MCF 10A (cell line): ENCODE measurements at regions of chr12 and their contacts with region 1.

Region 1: DNA sequence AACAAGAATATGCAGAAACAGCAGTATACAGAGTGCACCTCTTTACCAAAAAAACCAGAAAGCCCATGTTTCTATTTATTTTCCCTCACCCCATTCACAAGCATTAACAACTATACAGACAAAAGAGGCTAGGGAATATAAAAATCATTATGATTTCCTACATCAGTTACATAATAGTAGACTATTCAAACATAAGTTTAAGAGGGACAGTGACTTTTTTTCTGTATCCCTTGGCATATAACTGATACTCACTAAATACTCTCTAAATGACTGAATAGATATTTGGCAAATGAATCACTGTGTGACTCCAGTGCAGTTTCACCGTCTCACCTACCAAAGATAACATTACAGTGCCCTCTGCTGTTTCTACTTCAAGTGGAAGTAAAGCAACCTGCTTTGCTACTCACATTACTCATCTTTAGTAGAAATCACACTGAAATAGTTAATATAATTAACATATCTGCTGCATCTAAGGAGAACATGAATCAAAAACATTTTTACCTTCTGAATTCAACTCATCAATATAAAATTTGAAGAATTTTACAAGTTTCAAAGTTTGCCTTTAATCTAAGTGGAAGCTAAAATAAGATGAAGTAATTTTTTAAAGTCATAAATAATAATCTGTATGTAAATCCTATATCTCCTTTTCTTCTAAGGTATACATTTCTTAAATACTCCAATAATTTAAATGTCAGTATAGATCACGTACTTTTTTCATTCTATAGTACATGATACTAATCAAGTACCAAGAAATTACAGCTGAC is 103.8 kb downstream of the OSBPL8 start:
- DNase-seq: peak; percentile 87
- H3K4me3 Mint-ChIP-seq: no peak overlapping the region
- H3K27ac Mint-ChIP-seq: peak overlapping the region; percentile 84
- H3K4me1 Mint-ChIP-seq: peaks cover 21% of the 10 kb centered on the region
- H3K27me3 Mint-ChIP-seq: no peaks in the 10 kb centered on the region
- CTCF ChIP-seq: peak; percentile 49

Region 2: GRCh38 chr12:75511116-75512048 is 944.4 kb before region 1 on chr12 and contains the start of gene KRR1:
- CTCF ChIA-PET with region 1: interaction called, 5 read pairs
- POLR2A ChIA-PET with region 1: interaction called, 4 read pairs
- intact Hi-C with region 1: loop called (anchors 5 kb)
- DNase-seq: peak; percentile 95
- H3K4me3 Mint-ChIP-seq: peak within 1 kb of the TSS; percentile 100
- H3K27ac Mint-ChIP-seq: peak within 1 kb of the TSS; percentile 99
- H3K4me1 Mint-ChIP-seq: peaks cover 19% of the 10 kb centered on the region
- H3K27me3 Mint-ChIP-seq: no peaks in the 10 kb centered on the region
- CTCF ChIP-seq: no peak
- total RNA-seq, gene KRR1: 68.0 and 76.8 TPM in 2 replicates

Region 3: GRCh38 chr12:75526655-75527511 is 928.9 kb before region 1 on chr12:
- CTCF ChIA-PET with region 1: interaction called, 23 read pairs
- POLR2A ChIA-PET with region 1: no interaction called
- intact Hi-C with region 1: loop called (anchors 1 kb)
- DNase-seq: peak; percentile 59
- H3K4me3 Mint-ChIP-seq: no peak overlapping the region
- H3K27ac Mint-ChIP-seq: no peak overlapping the region
- H3K4me1 Mint-ChIP-seq: no peaks in the 10 kb centered on the region
- H3K27me3 Mint-ChIP-seq: no peaks in the 10 kb centered on the region
- CTCF ChIP-seq: peak; percentile 55

Region 4: DNA sequence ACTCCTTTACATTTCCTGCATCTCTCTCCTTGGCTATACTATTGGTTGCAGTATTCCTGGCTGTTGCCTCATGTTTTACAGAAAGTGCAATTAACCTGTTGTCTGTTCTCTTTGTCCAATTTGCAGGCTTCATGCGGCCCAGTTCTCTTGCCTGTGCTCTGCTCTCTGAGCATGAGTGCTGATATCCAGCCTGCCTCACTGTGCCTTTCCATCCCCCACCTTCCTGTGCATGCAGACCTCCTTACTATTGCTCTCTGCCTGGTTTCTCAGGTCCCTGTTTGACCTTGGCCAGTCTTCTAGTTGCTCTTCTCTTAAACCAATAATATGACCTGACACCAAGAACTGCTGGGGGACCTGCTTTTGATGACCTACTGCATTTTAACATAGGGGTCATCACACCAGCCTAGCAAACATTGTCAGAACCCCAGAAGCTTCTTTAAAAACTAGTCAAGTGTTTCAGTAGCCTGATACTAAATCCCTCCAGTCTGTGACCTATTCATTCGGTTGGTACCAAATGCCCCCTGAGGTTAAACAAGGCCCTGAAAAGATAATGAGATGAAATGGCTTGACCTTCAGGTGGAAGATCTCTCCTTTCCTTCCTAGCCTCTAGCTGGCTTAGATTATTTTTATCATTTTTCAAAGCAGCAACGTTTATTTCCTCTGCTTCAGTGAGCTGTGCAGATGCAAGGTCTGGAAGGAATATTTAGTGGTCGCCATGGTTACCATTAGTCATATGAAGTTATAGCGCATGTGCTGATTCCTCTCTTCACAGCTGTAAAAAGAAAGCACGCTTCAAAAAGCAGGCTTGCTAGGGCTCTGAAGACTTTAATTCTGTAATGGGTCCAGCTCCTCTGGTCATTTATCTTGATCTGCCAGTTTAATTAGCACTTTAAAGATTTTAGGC is 640.7 kb before region 1 on chr12:
- CTCF ChIA-PET with region 1: interaction called, 4 read pairs
- POLR2A ChIA-PET with region 1: no interaction called
- intact Hi-C with region 1: loop called (anchors 5 kb)
- DNase-seq: peak; percentile 37
- H3K4me3 Mint-ChIP-seq: no peak overlapping the region
- H3K27ac Mint-ChIP-seq: peak overlapping the region; percentile 37
- H3K4me1 Mint-ChIP-seq: peaks cover 8% of the 10 kb centered on the region
- H3K27me3 Mint-ChIP-seq: no peaks in the 10 kb centered on the region
- CTCF ChIP-seq: no peak

Region 5: GRCh38 chr12:76083904-76084862 is 371.6 kb before region 1 on chr12 and contains the start of gene NAP1L1:
- CTCF ChIA-PET with region 1: no interaction called
- POLR2A ChIA-PET with region 1: interaction called, 3 read pairs
- intact Hi-C with region 1: loop called (anchors 1 kb)
- DNase-seq: peak; percentile 98
- H3K4me3 Mint-ChIP-seq: peak within 1 kb of the TSS; percentile 86
- H3K27ac Mint-ChIP-seq: peak within 1 kb of the TSS; percentile 86
- H3K4me1 Mint-ChIP-seq: peaks cover 20% of the 10 kb centered on the region
- H3K27me3 Mint-ChIP-seq: no peaks in the 10 kb centered on the region
- CTCF ChIP-seq: no peak
- total RNA-seq, gene NAP1L1: 327 and 493 TPM in 2 replicates

Region 6: GRCh38 chr12:76559400-76560085 is 103.8 kb after region 1 on chr12 and contains the start of gene OSBPL8:
- CTCF ChIA-PET with region 1: interaction called, 13 read pairs
- POLR2A ChIA-PET with region 1: interaction called, 29 read pairs
- intact Hi-C with region 1: loop called (anchors 2 kb)
- DNase-seq: peak; percentile 95
- H3K4me3 Mint-ChIP-seq: peak within 1 kb of the TSS; percentile 89
- H3K27ac Mint-ChIP-seq: peak within 1 kb of the TSS; percentile 95
- H3K4me1 Mint-ChIP-seq: peaks cover 24% of the 10 kb centered on the region
- H3K27me3 Mint-ChIP-seq: no peaks in the 10 kb centered on the region
- CTCF ChIP-seq: no peak
- total RNA-seq, gene OSBPL8: 71.1 and 77.2 TPM in 2 replicates